ENCODE measurements at regions of chr4 and their contacts with region 1.

Region 1: DNA sequence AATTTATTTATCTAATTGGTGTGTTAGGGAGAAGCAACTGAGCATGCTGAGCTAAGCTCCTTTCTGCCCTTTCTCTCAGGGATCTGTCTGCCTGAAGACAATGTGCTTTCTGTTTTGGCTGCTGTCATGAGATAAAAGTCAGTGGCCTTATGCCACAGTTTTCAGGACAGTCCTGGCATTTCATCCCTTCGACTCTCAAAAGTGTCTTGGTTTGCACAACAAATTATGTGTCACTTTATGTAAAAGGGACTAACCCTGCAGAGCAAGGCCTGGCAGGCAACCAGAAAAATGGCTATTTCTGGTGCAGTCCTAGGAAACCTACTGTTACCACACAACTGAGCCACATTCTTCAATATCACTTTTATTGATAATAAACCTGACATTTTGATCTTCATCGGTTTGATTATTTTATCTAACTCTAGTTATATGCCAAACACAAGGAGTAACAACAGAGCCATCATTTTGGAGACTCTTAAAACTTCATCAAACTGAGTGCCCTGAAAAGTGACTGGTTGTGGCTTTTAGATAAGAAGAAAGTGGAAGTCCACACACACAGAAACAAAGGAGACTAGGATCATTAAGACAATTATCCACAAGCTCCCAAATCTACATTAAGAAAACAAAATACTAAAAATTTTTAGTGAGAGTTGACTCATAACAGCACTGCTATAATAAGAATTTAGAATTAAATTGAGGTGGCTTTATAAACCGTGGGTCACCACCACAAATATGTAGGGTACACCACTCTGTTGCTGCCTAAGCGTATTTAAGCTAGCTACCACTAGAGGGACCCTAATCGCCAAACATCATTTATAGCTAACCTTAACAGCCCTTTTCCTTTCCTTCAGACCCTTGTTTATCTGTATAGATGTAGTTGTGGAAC is 95.9 kb upstream of the PTPN13 start:
- DNase-seq: no peak
- ATAC-seq: peak; percentile 94
- H3K4me3 ChIP-seq: no peak overlapping the region
- H3K27ac ChIP-seq: no peak overlapping the region
- H3K4me1 ChIP-seq: peaks cover 12% of the 10 kb centered on the region
- H3K27me3 ChIP-seq: no peaks in the 10 kb centered on the region
- CTCF ChIP-seq: peak; percentile 86

Region 2: GRCh38 chr4:86749121-86749520 is 250.9 kb after region 1 on chr4:
- intact Hi-C with region 1: no loop called
- DNase-seq: no peak
- ATAC-seq: no peak
- H3K4me3 ChIP-seq: no peak overlapping the region
- H3K27ac ChIP-seq: no peak overlapping the region
- H3K4me1 ChIP-seq: no peaks in the 10 kb centered on the region
- H3K27me3 ChIP-seq: no peaks in the 10 kb centered on the region
- CTCF ChIP-seq: no peak

Region 3: DNA sequence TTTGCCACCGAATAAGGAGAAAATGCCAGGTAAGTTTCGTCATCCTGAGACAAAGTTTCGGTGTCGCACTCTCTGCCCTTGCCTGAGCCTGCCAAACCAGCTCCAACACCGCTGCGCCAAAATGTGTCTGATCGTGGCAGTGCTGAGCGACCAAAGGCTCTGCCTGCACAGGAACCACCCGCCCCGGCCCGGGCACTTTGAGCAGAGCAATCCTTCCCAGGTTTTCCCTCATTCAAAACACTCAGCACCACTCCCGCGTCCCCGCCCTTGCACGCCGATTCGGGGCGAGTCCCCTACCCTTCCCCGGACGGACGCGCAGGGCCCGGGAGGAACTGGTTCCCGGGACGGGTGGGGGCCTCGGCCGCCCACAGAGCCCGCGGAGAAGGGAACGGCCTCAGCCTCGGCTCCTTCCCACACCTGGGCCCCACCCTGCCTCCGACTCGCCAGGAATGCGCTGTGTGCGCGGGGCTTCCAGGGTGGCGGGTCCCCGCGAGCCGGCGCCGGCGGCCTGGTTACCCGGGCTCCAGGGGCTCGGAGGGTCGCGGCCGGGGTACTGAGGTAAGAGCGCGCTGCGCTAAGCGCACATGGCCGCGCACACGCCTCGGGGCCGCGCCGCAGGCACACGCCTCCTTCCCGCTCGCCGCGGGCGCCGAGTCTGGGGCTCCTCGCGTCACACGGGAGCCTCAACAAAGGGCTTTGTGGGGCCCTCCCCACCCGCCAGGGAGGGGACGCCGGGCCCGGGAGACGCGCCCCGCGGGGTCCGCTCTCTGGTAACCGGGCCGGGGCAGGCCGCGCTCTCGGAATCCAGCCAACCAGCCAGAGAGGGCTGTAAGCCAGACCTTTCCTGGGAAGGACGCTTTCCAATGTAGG is 393.8 kb after region 1 on chr4 and contains the start of gene C4orf36:
- intact Hi-C with region 1: loop called (anchors 5 kb)
- DNase-seq: peak; percentile 92
- ATAC-seq: peak; percentile 95
- H3K4me3 ChIP-seq: peak within 1 kb of the TSS; percentile 86
- H3K27ac ChIP-seq: peak within 1 kb of the TSS; percentile 89
- H3K4me1 ChIP-seq: peaks cover 5% of the 10 kb centered on the region
- H3K27me3 ChIP-seq: no peaks in the 10 kb centered on the region
- CTCF ChIP-seq: no peak
- total RNA-seq, gene C4orf36: 2.3 TPM

Measured in upper lobe of right lung (tissue), 1 donor.